ENCODE measurements at regions of chr5 and their contacts with region 1.

Region 1: DNA sequence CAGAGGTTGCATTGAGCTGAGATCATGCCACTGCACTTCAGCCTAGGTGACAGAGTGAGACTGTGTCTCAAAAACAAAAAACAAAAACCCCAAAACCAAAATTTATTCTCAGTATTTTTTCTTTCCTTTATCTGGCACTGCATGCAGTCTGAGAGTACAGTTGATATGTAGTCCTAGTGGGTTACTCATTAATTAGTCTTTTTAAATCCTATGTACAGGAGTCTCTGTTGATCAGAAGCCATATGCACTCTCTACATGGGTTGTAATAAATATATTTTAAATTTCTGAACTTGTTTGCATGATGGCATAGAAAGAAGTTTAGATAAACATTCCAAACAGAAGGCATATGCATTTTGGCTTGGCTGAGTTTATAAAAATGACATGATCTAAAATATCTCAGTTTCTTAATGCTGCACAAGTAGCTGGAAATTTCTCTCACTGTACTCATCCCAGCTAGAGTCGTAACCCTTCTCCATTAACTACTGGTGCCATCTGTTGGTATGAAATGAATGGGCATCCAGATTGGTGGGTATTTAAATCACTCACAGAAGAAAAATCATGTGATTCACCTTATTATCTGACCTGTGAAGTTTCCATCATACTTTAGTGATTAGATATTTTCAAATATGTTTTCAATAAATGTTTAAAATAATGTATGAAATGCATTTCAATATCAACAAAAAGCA is 284.8 kb downstream of the CTNND2 start:
- DNase-seq: peak in 1 of 2 experiments; percentile 44
- H3K4me3 ChIP-seq: no peak overlapping the region
- H3K4me3 Mint-ChIP-seq: no peak overlapping the region
- H3K27ac Mint-ChIP-seq: no peak overlapping the region
- H3K4me1 ChIP-seq: peaks cover 4% of the 10 kb centered on the region
- H3K4me1 Mint-ChIP-seq: peaks cover 14% of the 10 kb centered on the region
- H3K27me3 ChIP-seq: no peaks in the 10 kb centered on the region
- H3K27me3 Mint-ChIP-seq: no peaks in the 10 kb centered on the region
- CTCF ChIP-seq: peak; percentile 22 to 42

Region 2: DNA sequence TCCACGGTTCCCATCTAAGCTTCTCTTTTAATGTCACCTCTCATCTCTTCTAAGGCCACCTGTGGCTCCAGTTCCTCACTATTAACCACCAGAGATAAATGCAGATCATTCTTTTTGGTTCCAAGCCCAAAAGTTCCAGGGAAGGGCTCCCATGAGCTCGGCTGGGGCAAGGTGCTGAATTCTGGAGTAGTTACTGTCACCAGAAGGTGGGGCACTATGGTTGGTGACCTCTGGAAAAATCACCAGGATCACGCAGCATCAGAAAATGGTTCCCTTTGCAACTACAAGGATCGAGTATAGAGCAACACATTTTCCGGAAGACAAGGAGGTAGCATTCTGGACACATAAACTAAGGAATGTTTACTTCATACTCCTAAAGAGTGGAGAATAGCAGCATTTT is 329.7 kb before region 1 on chr5:
- CTCF ChIA-PET with region 1: no interaction called
- POLR2A ChIA-PET with region 1: no interaction called
- intact Hi-C with region 1: loop called (anchors 5 kb)
- DNase-seq: no peak
- H3K4me3 ChIP-seq: no peak overlapping the region
- H3K4me3 Mint-ChIP-seq: no peak overlapping the region
- H3K27ac Mint-ChIP-seq: no peak overlapping the region
- H3K4me1 ChIP-seq: peaks cover 7% of the 10 kb centered on the region
- H3K4me1 Mint-ChIP-seq: peaks cover 7% of the 10 kb centered on the region
- H3K27me3 ChIP-seq: no peaks in the 10 kb centered on the region
- H3K27me3 Mint-ChIP-seq: no peaks in the 10 kb centered on the region
- CTCF ChIP-seq: peak in 1 of 2 experiments; percentile 15

Region 3: DNA sequence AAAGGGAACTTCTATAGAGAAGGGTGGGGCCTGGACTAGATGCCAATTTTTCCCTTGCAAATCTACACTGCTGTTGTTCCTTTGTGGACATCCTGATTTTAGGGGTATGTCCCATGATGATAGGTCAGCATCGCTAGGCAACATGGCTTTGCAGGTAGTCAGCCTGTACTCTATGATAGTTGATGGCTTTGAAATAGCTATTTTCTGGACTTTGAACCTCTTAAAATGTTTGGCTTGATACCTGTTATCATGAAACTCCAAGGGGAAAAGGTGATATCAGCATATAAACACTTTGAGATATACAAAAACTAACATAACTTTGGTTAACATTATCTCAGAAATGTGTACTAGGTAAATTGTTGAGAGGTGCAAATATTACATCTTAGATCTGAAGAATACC is 248.5 kb before region 1 on chr5:
- CTCF ChIA-PET with region 1: no interaction called
- POLR2A ChIA-PET with region 1: no interaction called
- intact Hi-C with region 1: loop called (anchors 2 kb)
- DNase-seq: peak; percentile 71 to 81
- H3K4me3 ChIP-seq: no peak overlapping the region
- H3K4me3 Mint-ChIP-seq: no peak overlapping the region
- H3K27ac Mint-ChIP-seq: peak overlapping the region; percentile 1
- H3K4me1 ChIP-seq: peaks cover 46% of the 10 kb centered on the region
- H3K4me1 Mint-ChIP-seq: no peaks in the 10 kb centered on the region
- H3K27me3 ChIP-seq: no peaks in the 10 kb centered on the region
- H3K27me3 Mint-ChIP-seq: no peaks in the 10 kb centered on the region
- CTCF ChIP-seq: no peak

Region 4: DNA sequence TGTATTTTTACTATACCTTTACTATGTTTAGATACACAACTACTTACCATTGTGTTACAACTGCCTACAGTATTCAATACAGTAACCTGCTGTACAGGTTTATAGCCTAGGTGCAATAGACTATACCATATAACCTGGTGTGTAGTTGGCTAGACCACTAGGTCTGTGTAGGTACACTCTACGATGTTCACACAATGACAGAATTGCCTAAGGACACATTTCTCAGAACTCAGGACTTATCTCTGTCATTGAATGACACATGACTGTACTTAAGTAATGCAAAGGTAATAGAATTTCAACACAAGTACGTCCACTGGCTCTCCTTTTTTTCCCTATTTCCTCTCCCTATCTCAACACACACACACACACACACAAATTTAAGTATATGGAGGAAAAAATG is 100.8 kb before region 1 on chr5:
- CTCF ChIA-PET with region 1: no interaction called
- POLR2A ChIA-PET with region 1: no interaction called
- intact Hi-C with region 1: loop called (anchors 1 kb)
- DNase-seq: peak in 1 of 2 experiments; percentile 41
- H3K4me3 ChIP-seq: no peak overlapping the region
- H3K4me3 Mint-ChIP-seq: no peak overlapping the region
- H3K27ac Mint-ChIP-seq: peak overlapping the region; percentile 16
- H3K4me1 ChIP-seq: peaks cover 38% of the 10 kb centered on the region
- H3K4me1 Mint-ChIP-seq: peaks cover 16% of the 10 kb centered on the region
- H3K27me3 ChIP-seq: no peaks in the 10 kb centered on the region
- H3K27me3 Mint-ChIP-seq: no peaks in the 10 kb centered on the region
- CTCF ChIP-seq: no peak

Measured in Caco-2 (cell line).